PC-3 (cell line): ENCODE measurements at regions of chr6 and their contacts with region 1.

Region 1: DNA sequence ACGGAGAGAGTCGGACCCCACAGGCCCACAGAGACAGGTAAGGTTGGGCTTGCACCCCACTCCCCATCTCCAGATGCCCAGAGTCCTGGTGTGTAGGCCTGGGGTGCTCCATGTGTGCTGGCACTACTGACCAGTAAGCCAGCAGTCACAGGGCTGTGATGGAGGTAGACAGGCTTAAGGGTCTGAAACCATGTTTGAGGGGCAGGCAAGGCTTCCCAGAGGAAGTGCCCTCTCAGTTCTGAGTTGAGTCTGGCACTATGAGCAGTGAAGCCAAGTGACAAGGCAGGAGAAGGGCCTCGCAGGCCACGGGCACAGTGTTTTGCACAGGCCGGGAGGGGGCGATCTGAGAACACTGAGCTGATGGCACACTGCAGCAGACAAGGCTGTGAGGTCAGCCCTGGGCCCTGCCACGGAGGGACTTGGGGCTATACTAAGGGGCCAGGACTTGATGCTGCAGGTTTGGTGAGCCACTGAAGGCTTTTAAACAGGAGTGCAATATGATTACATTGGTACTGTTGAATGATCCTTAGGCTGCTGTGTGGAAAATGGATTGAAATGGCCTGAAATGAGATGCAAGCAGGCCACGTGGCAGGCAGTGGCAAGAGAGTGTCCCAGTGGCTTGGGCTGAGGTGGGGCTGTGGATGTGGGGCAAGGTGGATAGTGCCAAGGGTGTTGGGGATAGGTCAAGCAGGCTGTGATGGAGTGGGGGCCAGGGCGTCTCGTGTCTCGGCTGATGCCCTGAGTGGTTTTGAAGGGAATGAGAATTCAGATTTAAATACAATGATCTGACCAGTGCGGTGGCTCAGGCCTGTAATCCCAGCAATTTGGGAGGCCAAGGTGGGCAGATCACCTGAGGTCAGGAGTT is 20.3 kb downstream of the TTBK1 start:
- DNase-seq: peak; percentile 77
- ATAC-seq: peak; percentile 99
- H3K4me3 ChIP-seq: no peak overlapping the region
- H3K27ac ChIP-seq: no peak overlapping the region
- H3K4me1 ChIP-seq: no peaks in the 10 kb centered on the region
- H3K27me3 ChIP-seq: no peaks in the 10 kb centered on the region
- CTCF ChIP-seq: peak; percentile 95

Region 2: GRCh38 chr6:43334466-43335095 is 71.0 kb after region 1 on chr6:
- CTCF ChIA-PET with region 1: interaction called, 4 read pairs
- POLR2A ChIA-PET with region 1: interaction called, 9 read pairs
- intact Hi-C with region 1: loop called (anchors 1 kb)
- DNase-seq: peak; percentile 82
- ATAC-seq: peak; percentile 82
- H3K4me3 ChIP-seq: no peak overlapping the region
- H3K27ac ChIP-seq: no peak overlapping the region
- H3K4me1 ChIP-seq: no peaks in the 10 kb centered on the region
- H3K27me3 ChIP-seq: no peaks in the 10 kb centered on the region
- CTCF ChIP-seq: peak; percentile 79

Region 3: GRCh38 chr6:43402820-43403219 is 139.3 kb after region 1 on chr6:
- CTCF ChIA-PET with region 1: interaction called, 3 read pairs
- POLR2A ChIA-PET with region 1: no interaction called
- intact Hi-C with region 1: loop called (anchors 1 kb)
- DNase-seq: no peak
- ATAC-seq: no peak
- H3K4me3 ChIP-seq: no peak overlapping the region
- H3K27ac ChIP-seq: no peak overlapping the region
- H3K4me1 ChIP-seq: no peaks in the 10 kb centered on the region
- H3K27me3 ChIP-seq: no peaks in the 10 kb centered on the region
- CTCF ChIP-seq: no peak